PC-3 (cell line): ENCODE measurements at regions of chr20 and their contacts with region 1.

Region 1: GRCh38 chr20:4119854-4120209 is 104.5 kb upstream of the RNF24 start:
- DNase-seq: peak; percentile 89
- ATAC-seq: peak; percentile 78
- H3K4me3 ChIP-seq: no peak overlapping the region
- H3K27ac ChIP-seq: peak overlapping the region; percentile 95
- H3K4me1 ChIP-seq: peaks cover 27% of the 10 kb centered on the region
- H3K27me3 ChIP-seq: no peaks in the 10 kb centered on the region
- CTCF ChIP-seq: no peak

Region 2: GRCh38 chr20:4135385-4136077 is 15.7 kb after region 1 on chr20:
- CTCF ChIA-PET with region 1: no interaction called
- POLR2A ChIA-PET with region 1: no interaction called
- intact Hi-C with region 1: loop called (anchors 1 kb)
- DNase-seq: peak; percentile 99
- ATAC-seq: peak; percentile 92
- H3K4me3 ChIP-seq: no peak overlapping the region
- H3K27ac ChIP-seq: peak overlapping the region; percentile 96
- H3K4me1 ChIP-seq: peaks cover 46% of the 10 kb centered on the region
- H3K27me3 ChIP-seq: no peaks in the 10 kb centered on the region
- CTCF ChIP-seq: no peak

Region 3: GRCh38 chr20:4150070-4150441 is 30.2 kb after region 1 on chr20:
- CTCF ChIA-PET with region 1: no interaction called
- POLR2A ChIA-PET with region 1: no interaction called
- intact Hi-C with region 1: loop called (anchors 2 kb)
- DNase-seq: peak; percentile 41
- ATAC-seq: peak; percentile 4; the same call in 1 of the 2 replicates
- H3K4me3 ChIP-seq: peak overlapping the region; percentile 95
- H3K27ac ChIP-seq: no peak overlapping the region
- H3K4me1 ChIP-seq: peaks cover 46% of the 10 kb centered on the region
- H3K27me3 ChIP-seq: no peaks in the 10 kb centered on the region
- CTCF ChIP-seq: no peak